Vagina (tissue), 2 donors: ENCODE measurements at regions of chr2 and their contacts with region 1.

Region 1: DNA sequence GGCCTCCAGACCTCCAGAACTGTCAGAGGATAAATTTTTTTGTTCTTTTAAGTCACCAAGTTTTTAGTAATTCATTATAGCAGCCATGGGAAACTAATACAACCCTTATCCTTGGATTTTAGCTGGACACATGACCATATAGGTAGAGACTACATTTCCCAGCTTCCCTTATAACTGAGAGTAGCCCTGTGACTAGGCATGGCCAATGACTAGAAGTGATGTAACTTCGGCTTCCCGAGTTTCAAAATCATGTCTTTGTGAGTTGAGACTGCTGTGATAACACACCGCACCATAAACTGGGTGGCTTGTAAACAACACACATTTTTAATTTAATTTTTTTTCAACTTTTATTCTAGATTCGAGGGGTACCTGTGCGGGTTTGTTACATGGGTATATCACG is 134.0 kb upstream of the SERTAD2 start:
- DNase-seq: peak in 1 of 2 donors; percentile 37
- H3K4me3 ChIP-seq: no peak overlapping the region
- H3K27ac ChIP-seq: no peak overlapping the region
- H3K4me1 ChIP-seq: no peaks in the 10 kb centered on the region
- H3K27me3 ChIP-seq: no peaks in the 10 kb centered on the region
- CTCF ChIP-seq: no peak
- POLR2A ChIP-seq: no peak

Region 2: DNA sequence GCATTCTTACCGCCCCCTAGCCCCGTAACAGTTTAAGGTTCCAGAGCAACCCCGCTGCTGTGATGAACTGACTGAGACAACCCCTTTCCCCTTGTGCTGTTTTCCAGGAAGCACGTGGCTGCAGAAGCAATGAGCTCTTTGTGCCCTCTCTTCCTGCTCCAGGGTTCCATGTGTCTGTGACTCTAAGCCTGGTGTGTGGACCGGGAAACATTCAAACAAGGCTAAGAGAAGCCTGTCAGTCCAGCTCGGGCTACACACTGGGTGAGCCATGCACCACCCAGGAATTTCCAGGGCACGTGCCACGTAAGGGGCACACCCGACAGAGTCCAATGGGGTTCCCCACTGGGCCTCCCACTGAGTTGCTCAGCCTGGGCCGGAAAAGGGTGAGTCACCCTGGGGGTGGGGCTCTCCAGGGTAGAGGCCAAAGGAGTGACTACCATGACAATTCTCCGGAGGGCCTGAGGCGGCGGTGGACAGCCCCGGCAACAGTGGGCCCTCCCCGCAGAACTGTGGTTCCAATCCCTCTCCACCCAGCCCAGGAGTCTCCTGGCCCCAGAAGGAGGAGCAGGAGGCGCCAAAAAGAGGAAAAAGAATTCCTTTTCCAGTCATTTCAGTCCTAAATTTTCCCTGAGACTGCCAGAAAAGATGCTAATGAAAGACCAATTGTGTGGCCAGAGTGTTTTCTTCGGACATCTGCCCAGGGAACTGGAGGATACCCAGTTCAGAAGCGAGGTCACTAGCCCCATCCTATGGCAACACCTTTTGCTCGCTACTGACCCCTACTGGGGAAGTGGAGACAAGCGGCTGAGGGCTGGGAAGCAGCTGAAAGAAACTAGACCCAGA is 43.7 kb after region 1 on chr2:
- intact Hi-C with region 1: loop called (anchors 10 kb)
- DNase-seq: peak; percentile 92 to 99
- H3K4me3 ChIP-seq: no peak overlapping the region
- H3K27ac ChIP-seq: peak overlapping the region; percentile 70
- H3K4me1 ChIP-seq: peaks cover 20% of the 10 kb centered on the region
- H3K27me3 ChIP-seq: no peaks in the 10 kb centered on the region
- CTCF ChIP-seq: peak; percentile 48 to 58 (median 50)
- POLR2A ChIP-seq: no peak